AG04449 (cell line): ENCODE measurements at regions of chr15 and their contacts with region 1.

Region 1: GRCh38 chr15:58070801-58071418 is 5.4 kb upstream of the ALDH1A2 start:
- DNase-seq: no peak
- H3K4me3 ChIP-seq: no peak overlapping the region
- CTCF ChIP-seq: peak; percentile 81

Region 2: DNA sequence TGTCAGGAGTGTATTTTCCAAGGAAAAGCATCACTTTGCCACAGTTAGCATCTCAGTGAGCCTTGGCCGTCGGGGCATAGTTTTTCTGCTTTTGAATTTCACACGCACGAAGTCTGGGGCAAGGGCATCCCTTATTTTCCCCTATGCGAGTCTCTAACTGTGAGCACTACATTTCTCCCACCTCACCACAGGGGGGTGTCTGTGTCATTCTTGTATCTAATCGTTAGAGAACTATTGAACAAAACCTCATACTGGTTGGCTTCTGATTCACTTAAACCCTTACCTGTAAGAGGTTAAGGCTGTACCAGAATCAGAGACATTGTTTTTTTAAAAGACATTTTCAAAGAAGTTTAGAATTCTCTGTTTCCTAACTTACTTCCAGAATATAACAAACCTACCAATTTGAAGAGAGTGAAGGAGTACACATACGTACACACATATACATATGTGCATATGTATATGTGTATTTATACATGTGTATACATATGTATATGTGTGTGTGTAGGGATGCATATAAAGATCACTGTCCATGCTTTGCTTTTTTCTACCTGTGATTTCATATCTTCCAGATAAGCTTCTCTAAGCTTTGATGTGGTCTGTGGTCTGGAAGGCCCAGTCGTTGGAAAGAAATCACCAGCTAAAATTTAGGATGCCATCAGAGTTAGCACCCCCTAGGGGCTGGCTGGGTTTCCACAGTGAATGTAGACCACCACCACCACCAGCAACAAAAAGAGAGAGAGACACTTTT is 429.8 kb before region 1 on chr15:
- CTCF ChIA-PET with region 1: interaction called, 14 read pairs
- POLR2A ChIA-PET with region 1: no interaction called
- DNase-seq: no peak
- H3K4me3 ChIP-seq: no peak overlapping the region
- CTCF ChIP-seq: peak; percentile 53

Region 3: DNA sequence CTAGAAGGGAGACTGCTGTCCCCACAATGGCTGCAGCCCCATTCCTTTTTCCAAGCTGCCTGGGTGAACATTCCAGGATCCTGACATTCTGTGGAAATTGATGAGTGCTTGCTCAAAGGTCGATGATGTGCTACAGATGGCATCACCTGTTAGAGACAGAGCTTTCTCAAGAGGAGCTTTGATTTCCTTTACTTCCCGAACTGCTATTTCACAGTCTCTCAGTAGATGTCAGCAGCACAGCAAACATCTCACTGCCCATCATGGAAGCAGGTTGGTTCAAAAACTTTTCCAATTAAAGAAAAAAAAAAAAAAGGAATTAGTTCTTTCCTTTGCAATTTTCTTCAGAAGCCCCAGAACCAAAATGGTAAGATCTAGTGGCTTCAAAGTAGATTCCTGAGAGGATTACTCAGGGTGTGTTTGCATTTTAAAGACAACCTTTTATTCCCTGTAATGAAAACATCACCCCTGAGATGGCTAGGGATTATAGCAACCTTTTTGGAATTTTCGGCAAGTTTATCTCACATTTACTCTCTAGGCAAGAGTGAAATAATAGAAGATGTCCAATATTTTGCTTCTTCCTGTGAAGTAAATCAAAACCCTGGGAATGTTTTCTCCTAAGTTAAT is 319.6 kb before region 1 on chr15:
- CTCF ChIA-PET with region 1: interaction called, 240 read pairs
- POLR2A ChIA-PET with region 1: no interaction called
- DNase-seq: no peak
- H3K4me3 ChIP-seq: no peak overlapping the region
- CTCF ChIP-seq: peak; percentile 66

Region 4: DNA sequence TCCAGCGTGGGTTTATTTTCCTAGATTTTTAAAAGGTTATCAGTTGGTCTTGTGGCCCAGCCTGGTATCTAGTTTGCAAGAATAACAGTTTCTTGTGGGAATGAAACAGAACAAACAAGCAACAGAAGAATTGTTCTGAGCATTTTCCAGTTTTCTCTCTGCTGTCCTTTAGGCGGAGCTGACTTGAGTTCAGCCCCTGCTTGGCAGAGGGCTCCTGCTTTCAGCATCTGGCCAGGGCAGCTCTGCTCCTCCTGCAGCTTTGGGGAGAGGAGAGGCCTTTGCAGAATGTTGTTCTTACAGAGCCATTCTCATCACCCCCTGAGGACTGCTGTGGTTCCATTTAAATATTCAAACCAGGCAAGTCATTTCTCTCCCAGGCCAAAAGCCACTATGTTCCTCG is 123.1 kb before region 1 on chr15:
- CTCF ChIA-PET with region 1: no interaction called
- POLR2A ChIA-PET with region 1: no interaction called
- DNase-seq: no peak
- H3K4me3 ChIP-seq: no peak overlapping the region
- CTCF ChIP-seq: no peak

Region 5: DNA sequence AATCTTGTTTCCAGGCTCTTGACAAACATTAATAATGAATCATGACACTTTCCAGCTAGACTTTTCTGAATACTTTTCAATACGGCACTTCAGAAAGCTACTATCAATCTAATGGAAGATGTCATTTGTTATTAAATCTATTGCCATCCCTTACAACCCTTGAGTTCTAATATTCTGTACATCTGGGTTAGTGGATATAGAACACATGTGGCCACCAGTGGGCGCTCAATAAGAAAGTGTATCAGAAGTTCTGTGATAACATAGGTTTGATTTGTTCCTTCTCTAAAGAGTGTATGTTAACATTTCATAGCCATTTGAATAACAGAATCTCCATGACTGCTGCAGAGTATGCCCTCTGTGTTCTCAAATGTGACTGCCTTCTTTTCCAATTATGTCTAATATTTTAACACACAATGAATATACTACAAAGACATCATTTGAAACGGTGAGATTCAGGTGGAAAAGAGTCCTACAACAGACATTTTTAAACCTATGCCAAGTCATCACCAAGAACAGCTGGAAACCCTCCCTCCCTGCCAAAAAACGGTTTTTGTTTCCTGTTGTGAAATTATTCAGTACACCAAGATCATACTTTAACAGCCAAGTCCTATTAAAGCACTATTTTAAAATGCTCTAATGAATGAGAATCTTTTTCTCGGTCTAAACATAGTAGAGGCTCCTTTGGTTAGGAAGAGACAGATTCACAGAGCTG is 27.6 kb before region 1 on chr15:
- CTCF ChIA-PET with region 1: interaction called, 13 read pairs
- POLR2A ChIA-PET with region 1: no interaction called
- DNase-seq: no peak
- H3K4me3 ChIP-seq: no peak overlapping the region
- CTCF ChIP-seq: peak; percentile 51

Region 6: GRCh38 chr15:58086491-58086890 is 15.6 kb after region 1 on chr15:
- CTCF ChIA-PET with region 1: interaction called, 20 read pairs
- POLR2A ChIA-PET with region 1: interaction called, 5 read pairs
- DNase-seq: no peak
- H3K4me3 ChIP-seq: no peak overlapping the region
- CTCF ChIP-seq: no peak